ENCODE measurements at regions of chr15 and their contacts with region 1.

Region 1: DNA sequence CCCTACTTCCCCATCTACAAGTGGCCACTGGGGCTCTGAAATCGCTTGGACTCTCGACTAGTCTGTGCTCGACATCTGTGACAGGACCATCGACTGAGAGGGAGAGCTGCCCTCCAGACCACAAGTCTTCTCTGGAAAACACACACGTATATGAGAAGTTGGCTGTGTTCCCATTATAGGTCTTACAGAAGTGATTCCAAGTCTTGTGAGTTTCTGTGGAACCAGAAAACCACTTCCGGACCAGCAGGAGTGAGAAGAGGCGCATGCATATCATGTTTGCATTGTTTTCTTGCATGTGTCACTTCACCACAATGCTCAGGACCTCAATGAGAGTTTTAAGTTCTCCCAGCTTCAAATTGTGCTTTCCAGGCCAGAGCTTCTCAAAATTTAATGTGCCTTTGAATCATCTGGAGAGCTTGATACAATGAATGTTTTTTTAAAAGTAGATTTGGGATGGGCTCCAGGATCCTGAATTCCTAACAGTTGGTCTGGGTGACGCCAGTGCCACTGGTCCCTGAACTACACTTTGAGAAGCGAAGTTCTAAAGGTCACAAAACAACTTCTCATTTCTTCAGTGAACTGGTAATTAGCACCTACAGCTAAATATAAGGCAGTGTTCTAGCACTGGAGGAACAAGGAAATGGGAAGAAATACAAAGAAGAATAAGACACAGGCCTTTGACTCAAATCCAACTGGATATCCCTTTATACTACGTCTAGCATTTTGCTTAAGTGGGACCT is 15.7 kb downstream of the LIPC start:
- DNase-seq: no peak
- H3K4me3 ChIP-seq: no peak overlapping the region
- H3K27ac ChIP-seq: peak overlapping the region; percentile 16 to 56
- H3K4me1 ChIP-seq: no peaks in the 10 kb centered on the region
- H3K27me3 ChIP-seq: no peaks in the 10 kb centered on the region
- CTCF ChIP-seq: no peak
- POLR2A ChIP-seq: no peak

Region 2: GRCh38 chr15:59217876-59218498 is 770.5 kb after region 1 on chr15:
- intact Hi-C with region 1: loop called (anchors 5 kb)
- DNase-seq: no peak
- H3K4me3 ChIP-seq: no peak overlapping the region
- H3K27ac ChIP-seq: no peak overlapping the region
- H3K4me1 ChIP-seq: no peaks in the 10 kb centered on the region
- H3K27me3 ChIP-seq: no peaks in the 10 kb centered on the region
- CTCF ChIP-seq: no peak
- POLR2A ChIP-seq: no peak